RWPE1 (cell line): ENCODE measurements at regions of chr1 and their contacts with region 1.

Region 1: GRCh38 chr1:151881456-151881855 is 27.9 kb downstream of the THEM4 start:
- DNase-seq: no peak
- H3K27ac ChIP-seq: no peak overlapping the region
- CTCF ChIP-seq: peak; percentile 32; the same call in 1 of the 2 replicates

Region 2: GRCh38 chr1:151790071-151790940 is 91.2 kb before region 1 on chr1 and contains the start of gene TDRKH:
- CTCF ChIA-PET with region 1: no interaction called
- POLR2A ChIA-PET with region 1: no interaction called
- DNase-seq: peak; percentile 100
- H3K27ac ChIP-seq: peak within 1 kb of the TSS; percentile 72
- CTCF ChIP-seq: peak; percentile 25; the same call in 1 of the 2 replicates

Region 3: DNA sequence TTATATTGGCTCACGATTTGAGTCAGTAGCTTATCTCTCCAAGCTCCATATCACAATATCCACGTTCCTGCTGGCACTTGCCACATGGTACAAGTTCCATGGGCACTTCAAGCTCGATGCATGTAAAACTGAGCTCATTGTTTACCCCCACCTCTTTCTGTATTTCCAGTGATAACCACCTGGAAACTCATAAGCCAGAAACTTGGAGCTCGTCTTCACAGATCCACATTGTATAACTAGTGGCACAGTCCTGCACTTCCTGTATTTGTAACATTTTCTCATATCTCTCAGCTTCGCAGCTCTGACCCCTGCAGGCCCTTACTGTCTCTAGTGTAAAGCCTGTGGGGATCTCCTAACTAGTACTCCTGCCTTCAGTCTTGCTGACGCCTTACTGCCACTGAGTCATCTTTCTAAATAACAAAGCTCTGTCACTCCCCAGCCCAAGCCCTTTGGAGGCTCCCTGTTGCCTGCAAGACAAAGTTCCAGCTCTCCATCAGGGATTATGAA is 35.3 kb before region 1 on chr1:
- CTCF ChIA-PET with region 1: interaction called, 10 read pairs
- POLR2A ChIA-PET with region 1: interaction called, 4 read pairs
- DNase-seq: peak; percentile 58
- H3K27ac ChIP-seq: no peak overlapping the region
- CTCF ChIP-seq: no peak